Posterior cingulate gyrus (tissue), 11 donors: ENCODE measurements at regions of chr7 and their contacts with region 1.

Region 1: DNA sequence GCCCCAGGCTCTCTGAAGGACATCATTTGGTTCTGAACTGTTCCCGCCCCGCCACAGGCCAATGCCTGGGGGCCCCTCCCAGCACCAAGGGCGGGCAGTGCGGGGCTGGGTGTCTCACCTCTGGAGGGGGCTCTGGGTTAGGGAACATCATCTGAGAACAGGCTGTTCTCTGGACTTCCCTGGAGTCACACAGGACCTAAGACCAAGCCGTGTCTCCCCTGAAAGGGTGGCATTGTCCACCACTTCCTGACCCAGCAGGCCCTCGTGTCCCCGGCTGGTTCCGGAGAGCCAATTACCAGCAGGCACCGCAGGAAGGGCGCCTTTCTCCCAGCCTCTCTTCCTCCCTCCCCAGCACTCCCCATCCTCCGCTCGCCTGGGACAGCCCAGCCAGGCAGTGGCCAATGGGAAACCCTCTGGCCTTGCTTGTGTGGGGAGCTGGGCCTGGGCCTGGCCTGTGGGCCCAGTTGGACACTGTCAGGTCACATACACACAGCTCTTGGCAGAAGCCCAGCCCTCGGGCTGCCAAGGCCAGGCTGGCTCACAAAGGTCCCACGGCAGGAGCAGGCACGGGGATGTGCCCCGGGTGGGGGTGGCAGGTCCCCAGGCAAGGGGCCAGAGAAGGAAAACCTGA is 119.5 kb downstream of the SPDYE5 start:
- DNase-seq: peak; percentile 80 to 99 (median 92)

Region 2: DNA sequence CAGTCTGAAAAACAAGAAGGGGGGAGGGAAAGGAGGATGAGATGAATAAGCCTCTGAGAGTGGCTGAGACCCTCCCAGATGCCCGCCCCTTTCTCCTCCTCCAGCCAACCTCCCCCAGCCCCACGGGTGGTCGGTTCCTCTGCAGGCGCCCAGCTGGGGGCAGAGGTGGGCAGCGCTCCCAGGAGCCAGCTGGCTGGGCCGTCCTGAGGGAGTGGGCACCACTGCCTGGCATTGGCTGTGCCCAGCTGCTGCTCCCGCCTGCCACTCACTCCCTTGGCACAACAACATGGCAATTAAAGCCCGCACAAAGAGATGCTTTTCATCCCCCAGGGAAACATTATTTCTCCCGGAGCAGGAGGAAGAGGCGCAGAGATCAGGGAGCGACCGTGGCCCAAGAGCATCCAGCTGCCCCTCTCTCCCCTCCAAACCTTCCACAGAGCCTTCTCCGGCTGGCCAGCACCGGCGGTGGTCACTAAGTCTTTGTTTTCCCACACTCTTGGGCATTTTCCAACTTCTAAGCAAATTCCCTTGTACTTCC is 12.3 kb before region 1 on chr7:
- intact Hi-C with region 1: loop called (anchors 1 kb)
- DNase-seq: peak; percentile 89 to 99 (median 93)

Region 3: DNA sequence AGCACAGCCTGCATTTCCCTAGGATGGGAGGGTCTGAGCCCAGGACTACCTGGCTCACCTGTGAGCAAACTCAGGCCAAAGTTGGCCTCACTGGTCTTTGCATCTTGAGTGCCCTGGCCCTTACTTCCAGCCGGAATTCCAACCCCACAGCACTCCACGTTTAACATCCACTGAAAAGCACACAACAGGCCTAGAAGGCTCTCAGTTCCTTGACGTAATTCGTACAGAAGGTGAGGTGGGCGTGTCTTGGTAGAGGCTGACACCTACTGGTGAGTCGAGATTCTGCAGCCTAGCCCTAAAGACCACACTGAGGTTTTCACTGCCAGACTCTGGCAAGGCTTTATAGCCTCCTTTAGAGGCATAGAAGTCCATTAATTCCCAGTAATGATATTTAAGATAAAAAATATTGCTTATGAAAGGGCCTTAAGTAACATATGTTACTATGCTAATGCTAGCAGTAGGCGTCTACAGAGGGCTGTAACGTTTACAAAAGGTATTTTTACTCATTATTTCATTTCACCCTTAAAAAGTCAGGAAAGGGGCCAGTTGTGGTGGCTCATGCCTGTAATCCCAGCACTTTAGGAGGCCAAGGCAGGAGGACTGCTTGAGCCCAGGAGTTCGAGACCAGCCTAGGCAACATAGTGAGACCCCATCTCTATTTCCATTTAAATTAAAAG is 31.3 kb after region 1 on chr7:
- intact Hi-C with region 1: loop called (anchors 2 kb)
- DNase-seq: peak in 1 of 10 donors; percentile 79

Region 4: DNA sequence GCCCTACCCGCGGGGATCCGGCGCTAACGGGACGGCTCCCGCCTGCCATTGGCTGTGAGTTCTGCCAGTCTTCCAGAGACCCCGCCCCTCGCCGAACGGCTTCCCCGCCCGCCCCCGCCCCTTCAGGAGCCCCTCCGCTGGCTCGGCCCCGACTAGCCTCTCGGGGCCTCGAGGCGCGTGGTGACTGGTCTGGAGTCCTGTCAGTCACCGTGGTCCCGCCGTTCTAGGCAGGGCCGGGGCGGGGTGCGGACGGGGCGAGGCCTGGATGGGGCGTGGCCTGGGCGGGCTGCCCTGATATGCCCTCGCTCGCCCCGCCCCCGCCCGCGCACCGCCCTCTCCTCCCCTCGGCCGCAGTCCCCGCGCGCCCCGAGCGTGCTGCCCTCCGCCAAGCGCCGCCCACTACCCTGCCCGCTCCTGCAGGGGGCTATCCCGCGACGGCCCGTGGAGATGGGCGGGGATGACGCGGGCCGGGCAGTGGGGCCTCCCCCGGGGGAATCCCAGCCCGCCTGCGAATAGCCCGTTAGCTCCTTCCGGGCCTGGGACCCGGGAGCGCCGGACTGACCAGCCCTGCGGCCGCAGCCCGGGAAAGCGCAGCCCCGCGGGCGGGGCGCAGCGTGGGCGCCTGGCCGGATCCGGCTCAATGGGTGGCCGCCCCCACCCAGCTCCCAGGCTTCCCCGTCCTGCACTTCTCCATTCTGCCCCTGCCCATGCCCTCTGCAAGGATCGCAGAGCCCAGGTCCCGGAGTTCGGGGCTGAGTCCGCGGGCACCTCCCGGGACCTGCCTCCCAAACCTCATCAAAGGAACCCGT is 127.5 kb after region 1 on chr7:
- intact Hi-C with region 1: loop called (anchors 5 kb)
- DNase-seq: peak; percentile 99 to 100 (median 100)

Region 5: DNA sequence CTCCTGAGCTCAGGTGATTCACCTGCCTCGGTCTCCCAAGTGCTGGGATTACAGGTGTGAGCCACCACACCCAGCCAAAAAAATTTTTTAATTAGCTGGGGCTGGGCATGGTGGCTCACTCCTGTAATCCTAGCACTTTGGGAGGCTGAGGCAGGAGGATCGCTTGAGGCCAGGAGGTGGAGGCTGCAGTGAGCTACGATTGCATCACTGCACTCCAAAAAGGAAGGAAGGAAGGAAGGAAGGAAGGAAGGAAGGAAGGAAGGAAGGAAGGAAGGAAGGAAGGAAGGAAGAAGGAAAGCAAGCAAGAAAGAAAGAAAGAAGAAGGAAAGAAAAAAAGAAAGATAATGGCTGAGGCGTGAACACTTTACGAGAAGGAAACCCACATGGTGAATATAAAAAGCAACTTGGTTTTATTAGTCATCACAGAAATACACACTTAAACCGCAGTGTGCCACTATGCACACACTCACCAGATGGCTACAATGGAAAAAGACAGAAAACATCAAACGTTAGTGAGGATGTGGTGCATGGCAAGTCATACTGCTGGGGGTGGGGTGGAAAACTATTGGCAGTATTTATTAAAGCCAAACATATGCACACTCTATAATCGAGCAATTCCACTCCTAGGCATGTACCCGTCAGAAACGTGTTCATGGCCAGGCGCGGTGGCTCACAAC is 164.8 kb after region 1 on chr7:
- intact Hi-C with region 1: no loop called
- DNase-seq: no peak